HepG2 (cell line): ENCODE measurements at regions of chr15 and their contacts with region 1.

Region 1: GRCh38 chr15:26864664-26865191 is 2.1 kb upstream of the GABRA5 start:
- DNase-seq: no peak
- ATAC-seq: peak; percentile 54
- H3K4me3 ChIP-seq: no peak overlapping the region
- H3K27ac ChIP-seq: no peak overlapping the region
- H3K4me1 ChIP-seq: no peaks in the 10 kb centered on the region
- H3K27me3 ChIP-seq: no peaks in the 10 kb centered on the region; a peak in 2 of 5 replicates
- CTCF ChIP-seq: peak; percentile 65
- EP300 ChIP-seq: no peak
- POLR2A ChIP-seq: no peak
- RAD21 ChIP-seq: no peak

Region 2: DNA sequence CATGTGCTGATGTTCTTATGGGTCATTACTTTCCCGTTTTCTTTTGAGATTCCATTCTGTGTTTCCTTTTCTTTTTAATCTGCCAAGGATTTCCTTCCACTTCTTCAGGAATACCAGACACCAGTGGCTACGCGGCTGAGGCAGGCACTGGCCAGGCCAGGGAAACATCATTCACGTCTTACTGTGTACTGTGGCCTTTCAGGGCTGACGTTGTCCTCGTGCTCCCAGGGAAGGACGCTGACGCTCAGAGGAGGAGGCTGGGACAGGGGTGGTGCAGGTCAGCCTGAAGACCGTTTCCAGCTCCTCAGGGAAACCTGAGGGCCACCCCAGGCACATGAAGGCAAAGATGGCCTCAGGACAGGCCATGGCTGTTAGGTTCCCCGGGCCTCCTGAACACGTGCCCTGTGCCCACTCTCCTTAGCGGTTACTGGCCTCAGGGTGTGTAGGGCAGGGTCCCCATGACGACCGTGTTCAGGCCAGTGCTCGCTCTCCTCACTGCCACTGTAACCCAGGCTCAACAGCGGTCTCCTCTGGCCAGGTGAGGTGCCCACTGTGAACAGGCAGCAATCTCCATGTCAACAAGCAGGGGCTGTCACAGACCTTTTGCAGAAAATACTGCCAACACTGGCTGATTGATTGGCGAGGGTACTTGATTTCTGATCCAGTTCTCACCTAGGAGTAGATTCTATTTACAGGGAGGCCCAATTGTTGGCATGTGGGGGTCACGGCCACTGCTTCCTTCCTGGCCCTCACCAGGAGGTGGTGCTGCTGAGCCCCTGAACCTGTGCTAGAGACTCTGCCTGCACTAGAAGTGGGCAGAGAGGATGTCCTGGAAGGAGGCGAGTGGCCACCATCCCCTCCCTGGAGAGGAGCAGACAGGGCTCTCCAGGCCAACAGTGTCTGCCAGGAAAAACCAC is 1171.1 kb before region 1 on chr15:
- CTCF ChIA-PET with region 1: no interaction called
- POLR2A ChIA-PET with region 1: no interaction called
- in situ Hi-C with region 1: no loop called
- intact Hi-C with region 1: loop called (anchors 10 kb)
- DNase-seq: peak; percentile 7
- ATAC-seq: peak; percentile 90
- H3K4me3 ChIP-seq: no peak overlapping the region
- H3K27ac ChIP-seq: no peak overlapping the region
- H3K4me1 ChIP-seq: no peaks in the 10 kb centered on the region
- H3K27me3 ChIP-seq: no peaks in the 10 kb centered on the region
- CTCF ChIP-seq: peak; percentile 71
- EP300 ChIP-seq: no peak
- POLR2A ChIP-seq: no peak
- RAD21 ChIP-seq: no peak

Region 3: GRCh38 chr15:25933456-25934158 is 931.1 kb before region 1 on chr15:
- CTCF ChIA-PET with region 1: no interaction called
- POLR2A ChIA-PET with region 1: no interaction called
- in situ Hi-C with region 1: loop called (anchors 25 kb)
- intact Hi-C with region 1: no loop called
- DNase-seq: peak; percentile 47
- ATAC-seq: peak; percentile 99
- H3K4me3 ChIP-seq: peak overlapping the region in 2 of 3 experiments; percentile 24 to 64; a peak in 1 of 6 replicates
- H3K27ac ChIP-seq: no peak overlapping the region
- H3K4me1 ChIP-seq: peaks cover 7% of the 10 kb centered on the region
- H3K27me3 ChIP-seq: no peaks in the 10 kb centered on the region
- CTCF ChIP-seq: peak; percentile 75
- EP300 ChIP-seq: no peak
- POLR2A ChIP-seq: no peak
- RAD21 ChIP-seq: no peak

Region 4: GRCh38 chr15:25944386-25944785 is 920.3 kb before region 1 on chr15:
- CTCF ChIA-PET with region 1: no interaction called
- POLR2A ChIA-PET with region 1: no interaction called
- in situ Hi-C with region 1: loop called (anchors 25 kb)
- intact Hi-C with region 1: loop called (anchors 5 kb)
- DNase-seq: no peak
- ATAC-seq: peak; percentile 56
- H3K4me3 ChIP-seq: no peak overlapping the region
- H3K27ac ChIP-seq: no peak overlapping the region
- H3K4me1 ChIP-seq: no peaks in the 10 kb centered on the region
- H3K27me3 ChIP-seq: no peaks in the 10 kb centered on the region
- CTCF ChIP-seq: peak; percentile 31; the same call in 1 of the 2 replicates
- EP300 ChIP-seq: no peak
- POLR2A ChIP-seq: no peak
- RAD21 ChIP-seq: no peak

Region 5: DNA sequence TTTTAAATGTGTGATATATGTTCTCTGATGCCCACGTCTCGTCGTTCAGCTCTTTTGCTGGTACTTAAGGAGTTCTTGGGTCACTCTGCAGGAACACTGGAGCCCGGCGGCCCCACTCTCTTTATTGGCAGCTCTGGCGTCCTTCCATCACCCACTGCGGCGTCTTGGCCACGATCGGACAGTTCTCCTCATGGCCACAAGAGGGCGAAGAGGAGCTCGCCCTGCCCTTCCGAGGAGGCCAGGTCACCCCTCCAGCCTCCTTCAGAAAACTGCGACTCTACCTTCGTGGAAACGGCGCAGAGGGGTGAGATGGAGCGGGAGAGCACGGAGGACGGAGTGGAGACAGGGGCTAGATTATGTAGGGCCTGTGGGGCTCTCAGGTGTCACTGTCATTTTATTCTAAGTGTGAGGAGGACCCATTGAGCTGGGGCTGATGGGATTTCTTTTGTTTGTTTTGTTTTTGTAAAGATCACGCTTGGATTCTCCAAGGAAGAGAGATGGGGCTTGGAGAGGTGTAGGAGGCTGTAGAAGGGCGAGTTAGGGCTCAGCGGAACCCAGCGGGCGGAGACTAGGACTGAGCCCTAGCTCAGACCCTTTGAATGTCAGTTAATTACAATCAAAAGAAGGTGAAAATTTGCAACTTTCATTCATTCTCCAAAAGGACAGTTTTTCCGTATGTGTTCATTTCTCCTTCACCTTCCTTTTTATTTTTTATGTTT is 25.8 kb before region 1 on chr15:
- CTCF ChIA-PET with region 1: no interaction called
- POLR2A ChIA-PET with region 1: no interaction called
- in situ Hi-C with region 1: no loop called
- intact Hi-C with region 1: loop called (anchors 1 kb)
- DNase-seq: no peak
- ATAC-seq: peak; percentile 52; the same call in 1 of the 3 replicates
- H3K4me3 ChIP-seq: no peak overlapping the region
- H3K27ac ChIP-seq: no peak overlapping the region
- H3K4me1 ChIP-seq: no peaks in the 10 kb centered on the region
- H3K27me3 ChIP-seq: peaks cover 0 to 4% of the 10 kb centered on the region in 2 experiments; a peak in 1 of 5 replicates
- CTCF ChIP-seq: peak; percentile 54
- EP300 ChIP-seq: no peak
- POLR2A ChIP-seq: no peak
- RAD21 ChIP-seq: no peak

Region 6: GRCh38 chr15:26852980-26853379 is 11.7 kb before region 1 on chr15:
- CTCF ChIA-PET with region 1: no interaction called
- POLR2A ChIA-PET with region 1: no interaction called
- in situ Hi-C with region 1: no loop called
- intact Hi-C with region 1: no loop called
- DNase-seq: no peak
- ATAC-seq: no peak
- H3K4me3 ChIP-seq: no peak overlapping the region
- H3K27ac ChIP-seq: no peak overlapping the region
- H3K4me1 ChIP-seq: no peaks in the 10 kb centered on the region
- H3K27me3 ChIP-seq: no peaks in the 10 kb centered on the region
- CTCF ChIP-seq: no peak
- EP300 ChIP-seq: no peak
- POLR2A ChIP-seq: no peak
- RAD21 ChIP-seq: no peak